HEK293 (cell line): ENCODE measurements at regions of chr7 and their contacts with region 1.

Region 1: GRCh38 chr7:113421696-113422330 is 303.5 kb upstream of the SMIM30 start:
- H3K4me3 ChIP-seq: no peak overlapping the region
- H3K27ac ChIP-seq: no peak overlapping the region
- H3K4me1 ChIP-seq: no peaks in the 10 kb centered on the region
- CTCF ChIP-seq: peak; percentile 74

Region 2: GRCh38 chr7:113408999-113409398 is 12.8 kb before region 1 on chr7:
- CTCF ChIA-PET with region 1: interaction called, 15 read pairs
- POLR2A ChIA-PET with region 1: no interaction called
- H3K4me3 ChIP-seq: no peak overlapping the region
- H3K27ac ChIP-seq: no peak overlapping the region
- H3K4me1 ChIP-seq: no peaks in the 10 kb centered on the region
- CTCF ChIP-seq: no peak

Region 3: GRCh38 chr7:113657603-113658002 is 235.8 kb after region 1 on chr7:
- CTCF ChIA-PET with region 1: no interaction called
- POLR2A ChIA-PET with region 1: no interaction called
- H3K4me3 ChIP-seq: no peak overlapping the region
- H3K27ac ChIP-seq: no peak overlapping the region
- H3K4me1 ChIP-seq: no peaks in the 10 kb centered on the region
- CTCF ChIP-seq: no peak